HepG2 (cell line): ENCODE measurements at regions of chr1 and their contacts with region 1.

Region 1: GRCh38 chr1:146019231-146020057 is 2.1 kb downstream of the HJV start:
- DNase-seq: no peak
- ATAC-seq: no peak
- H3K4me3 ChIP-seq: no peak overlapping the region
- H3K27ac ChIP-seq: no peak overlapping the region
- H3K4me1 ChIP-seq: peaks cover 27% of the 10 kb centered on the region
- H3K27me3 ChIP-seq: no peaks in the 10 kb centered on the region
- CTCF ChIP-seq: no peak
- EP300 ChIP-seq: no peak
- POLR2A ChIP-seq: no peak
- RAD21 ChIP-seq: no peak

Region 2: DNA sequence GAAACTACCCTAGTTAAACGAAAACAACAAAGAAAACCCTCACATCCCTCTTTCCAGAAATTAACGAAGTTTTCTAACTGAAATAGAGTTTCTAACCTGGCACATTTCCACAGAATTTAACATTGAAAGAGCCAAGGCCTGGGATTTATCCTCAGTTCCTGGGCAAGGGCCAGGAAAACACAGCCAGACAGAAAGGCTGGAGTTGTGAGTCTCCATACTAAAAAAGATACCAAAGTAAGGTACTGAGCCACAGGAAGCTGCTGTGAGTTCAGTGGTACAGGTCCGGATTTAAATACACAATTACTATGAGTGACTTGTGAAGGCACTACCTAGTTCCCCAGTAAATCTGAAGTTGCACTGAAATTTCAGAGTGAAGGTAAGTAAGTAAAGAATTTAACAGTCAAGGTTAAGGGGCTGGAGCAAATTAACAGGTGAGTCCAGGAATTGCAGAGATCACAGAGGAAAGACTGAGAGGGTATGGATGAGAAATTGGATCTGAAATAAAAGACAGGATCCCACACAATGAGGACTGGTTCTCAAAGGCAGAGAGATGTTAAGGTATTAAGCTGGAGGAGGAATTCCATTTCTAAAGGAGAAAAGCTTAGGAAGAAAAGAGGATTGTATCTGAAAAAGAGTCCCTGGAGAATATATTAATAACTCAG is 62.5 kb before region 1 on chr1:
- CTCF ChIA-PET with region 1: no interaction called
- POLR2A ChIA-PET with region 1: no interaction called
- in situ Hi-C with region 1: no loop called
- intact Hi-C with region 1: no loop called
- DNase-seq: no peak
- ATAC-seq: no peak
- H3K4me3 ChIP-seq: peak overlapping the region; percentile 73 to 89 (median 80)
- H3K27ac ChIP-seq: peak overlapping the region; percentile 61
- H3K4me1 ChIP-seq: peaks cover 65% of the 10 kb centered on the region
- H3K27me3 ChIP-seq: peaks cover 0 to 21% of the 10 kb centered on the region in 2 experiments; a peak in 3 of 5 replicates
- CTCF ChIP-seq: no peak
- EP300 ChIP-seq: no peak
- POLR2A ChIP-seq: no peak
- RAD21 ChIP-seq: no peak

Region 3: GRCh38 chr1:145996433-145997015 is 22.9 kb before region 1 on chr1 and contains the start of gene TXNIP:
- CTCF ChIA-PET with region 1: no interaction called
- POLR2A ChIA-PET with region 1: no interaction called
- in situ Hi-C with region 1: no loop called
- intact Hi-C with region 1: no loop called
- DNase-seq: peak; percentile 94
- ATAC-seq: peak; percentile 99
- H3K4me3 ChIP-seq: peak within 1 kb of the TSS; percentile 68 to 98 (median 91)
- H3K27ac ChIP-seq: peak within 1 kb of the TSS; percentile 94
- H3K4me1 ChIP-seq: peaks cover 67% of the 10 kb centered on the region
- H3K27me3 ChIP-seq: no peaks in the 10 kb centered on the region; a peak in 1 of 5 replicates
- CTCF ChIP-seq: peak; percentile 14; the same call in 1 of the 2 replicates
- EP300 ChIP-seq: peak in 1 of 2 experiments; percentile 97; a peak in 3 of 4 replicates
- POLR2A ChIP-seq: peak; percentile 94 to 99
- RAD21 ChIP-seq: 0 out of 2 replicates have a peak, but pooled peaks have one; percentile 14
- total RNA-seq, gene TXNIP: 24.4 and 25.4 TPM in 2 replicates

Region 4: DNA sequence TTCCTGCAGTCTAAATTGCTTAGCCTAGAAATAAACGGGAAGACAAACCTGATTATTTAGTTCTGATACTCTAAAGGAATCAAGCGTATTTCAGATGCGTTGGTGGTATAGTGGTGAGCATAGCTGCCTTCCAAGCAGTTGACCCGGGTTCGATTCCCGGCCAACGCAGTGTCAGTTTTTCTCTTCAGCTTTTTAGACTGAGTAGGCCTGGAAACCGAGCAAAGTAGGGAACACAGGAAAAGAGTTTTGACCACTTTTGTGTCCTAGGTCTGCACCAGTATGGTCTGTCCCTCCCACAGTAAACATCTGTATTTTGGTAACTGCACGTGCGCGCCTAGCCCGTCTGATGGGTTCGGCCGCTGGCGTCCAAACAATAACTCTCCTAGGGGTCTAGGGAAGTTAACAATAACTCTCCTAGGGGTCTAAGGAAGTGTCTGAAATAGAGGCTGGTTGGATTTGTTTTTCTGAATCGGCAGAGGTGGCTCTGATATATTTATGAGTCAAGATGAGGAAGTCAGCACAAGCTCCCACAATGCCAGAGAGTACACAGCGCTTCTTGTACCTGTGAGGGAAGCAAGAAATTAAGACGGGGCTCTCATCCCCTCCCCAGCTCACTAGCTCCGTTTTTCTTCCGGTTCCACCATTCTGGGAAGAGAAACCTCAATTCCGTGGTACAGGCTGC is 17.7 kb after region 1 on chr1:
- CTCF ChIA-PET with region 1: no interaction called
- POLR2A ChIA-PET with region 1: interaction called, 15 read pairs
- in situ Hi-C with region 1: no loop called
- intact Hi-C with region 1: no loop called
- DNase-seq: peak; percentile 90
- ATAC-seq: peak; percentile 69
- H3K4me3 ChIP-seq: peak overlapping the region; percentile 73 to 86 (median 84)
- H3K27ac ChIP-seq: peak overlapping the region; percentile 89
- H3K4me1 ChIP-seq: peaks cover 45% of the 10 kb centered on the region
- H3K27me3 ChIP-seq: no peaks in the 10 kb centered on the region; a peak in 1 of 5 replicates
- CTCF ChIP-seq: no peak
- EP300 ChIP-seq: no peak
- POLR2A ChIP-seq: no peak
- RAD21 ChIP-seq: no peak